Activated T-helper 2 cell treated with anti-CD3 and anti-CD28 coated beads, Interferon-gamma antibody, Interleukin-2, Interleukin-4, amounts not matched to agents 10 μg/mL and 5 μg/mL and 100 μg/mL, durations not matched to agents 14 hours and 24 hours and 36 hours (primary cell): ENCODE measurements at regions of chr1 and their contacts with region 1.

Region 1: GRCh38 chr1:244835276-244836134 is at the start of gene COX20:
- DNase-seq: peak; percentile 87
- H3K4me3 Mint-ChIP-seq: peak within 1 kb of the TSS; percentile 92
- H3K27ac Mint-ChIP-seq: peak within 1 kb of the TSS; percentile 99
- H3K4me1 Mint-ChIP-seq: peaks cover 45% of the 10 kb centered on the region
- H3K27me3 Mint-ChIP-seq: no peaks in the 10 kb centered on the region
- total RNA-seq, gene COX20: 27.1 and 33.2 TPM in 2 replicates

Region 2: DNA sequence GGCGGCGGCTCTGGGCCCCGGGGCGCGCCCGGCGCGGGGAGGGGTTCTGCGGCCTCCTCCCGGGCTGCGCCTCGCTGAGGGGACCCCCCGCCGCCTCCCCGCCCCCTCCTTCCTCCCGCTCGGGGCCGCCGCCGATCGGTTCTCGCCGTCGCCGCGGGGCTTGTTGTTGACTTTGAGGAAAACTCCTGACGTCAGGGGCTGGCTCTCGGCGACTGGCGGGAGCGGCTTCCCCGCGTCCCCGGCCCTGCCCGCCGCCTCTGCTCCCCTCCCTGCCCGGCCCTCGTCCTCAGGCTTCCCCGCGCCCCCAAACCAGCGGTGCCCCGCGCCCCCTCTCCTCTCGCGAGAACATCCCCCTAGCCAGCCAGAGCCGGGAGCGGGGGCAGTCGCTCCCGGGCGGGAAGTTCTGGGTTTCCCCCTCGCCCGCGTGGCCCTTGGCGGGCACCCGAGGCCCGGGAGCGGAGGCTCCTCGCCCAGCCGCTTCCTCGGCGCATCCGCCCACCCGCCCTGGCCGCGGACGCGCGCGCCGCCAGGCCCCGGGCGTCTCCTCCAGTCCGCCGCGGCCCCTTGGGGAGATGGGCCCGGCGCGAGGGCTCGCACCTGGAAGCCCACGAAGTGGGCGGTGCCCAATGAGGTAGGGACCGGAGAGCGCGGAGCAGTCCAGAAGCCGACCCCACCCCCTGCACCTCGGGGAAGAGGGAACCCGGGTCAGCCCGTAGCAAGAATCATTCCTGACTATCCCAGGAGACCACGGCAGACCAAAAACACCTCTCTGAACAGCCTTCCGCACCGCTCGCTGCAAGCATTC is 984.9 kb before region 1 on chr1:
- intact Hi-C with region 1: loop called (anchors 10 kb)
- DNase-seq: peak; percentile 73
- H3K4me3 Mint-ChIP-seq: peak overlapping the region; percentile 81
- H3K27ac Mint-ChIP-seq: peak overlapping the region; percentile 84
- H3K4me1 Mint-ChIP-seq: peaks cover 18% of the 10 kb centered on the region
- H3K27me3 Mint-ChIP-seq: peaks cover 39% of the 10 kb centered on the region

Region 3: GRCh38 chr1:244451951-244452795 is 383.3 kb before region 1 on chr1:
- intact Hi-C with region 1: loop called (anchors 2 kb)
- DNase-seq: peak; percentile 98
- H3K4me3 Mint-ChIP-seq: peak overlapping the region; percentile 95
- H3K27ac Mint-ChIP-seq: peak overlapping the region; percentile 96
- H3K4me1 Mint-ChIP-seq: peaks cover 34% of the 10 kb centered on the region
- H3K27me3 Mint-ChIP-seq: no peaks in the 10 kb centered on the region

Region 4: DNA sequence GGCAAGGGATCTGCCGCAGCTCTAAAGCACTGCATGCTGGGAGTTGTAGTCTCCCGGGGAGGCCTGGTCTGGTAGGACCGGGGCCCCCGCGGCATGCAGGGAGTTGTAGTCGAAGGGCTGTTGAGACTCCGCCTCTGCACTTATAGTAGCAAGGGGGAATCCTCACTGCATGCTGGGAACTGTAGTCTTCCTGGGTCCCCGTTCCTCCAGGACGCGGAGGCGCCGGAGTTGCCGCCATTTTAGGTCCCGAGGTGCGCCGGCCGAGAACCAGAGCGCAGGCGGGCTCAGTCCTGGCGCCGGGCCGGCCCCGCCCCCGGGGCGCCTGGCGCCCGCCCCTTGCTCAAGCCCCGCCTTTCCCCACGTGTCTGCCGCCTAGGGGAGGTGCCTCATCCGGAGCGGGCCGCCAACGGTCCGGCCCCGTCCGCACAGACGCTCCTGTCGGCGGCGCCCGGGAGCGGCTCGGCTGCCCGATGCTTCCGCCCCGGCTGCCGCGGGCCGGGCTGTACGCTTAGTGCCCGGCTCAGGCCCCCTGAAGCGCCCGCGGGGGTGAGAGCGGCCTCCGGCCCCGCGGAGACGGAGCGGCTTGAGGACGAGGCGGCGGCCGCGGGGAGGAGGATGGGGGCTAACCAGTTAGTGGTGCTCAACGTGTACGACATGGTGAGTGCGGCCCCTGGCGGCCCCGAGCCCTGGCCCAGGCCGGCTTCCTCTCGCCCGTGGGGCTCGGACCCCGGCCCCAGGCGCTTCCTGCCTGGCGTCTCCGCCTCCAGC is 182.6 kb before region 1 on chr1 and contains the start of gene DESI2:
- intact Hi-C with region 1: loop called (anchors 1 kb)
- DNase-seq: peak; percentile 98
- H3K4me3 Mint-ChIP-seq: peak within 1 kb of the TSS; percentile 82
- H3K27ac Mint-ChIP-seq: peak within 1 kb of the TSS; percentile 71
- H3K4me1 Mint-ChIP-seq: peaks cover 20% of the 10 kb centered on the region
- H3K27me3 Mint-ChIP-seq: peaks cover 1% of the 10 kb centered on the region
- total RNA-seq, gene DESI2: 27.4 TPM in 2 replicates

Region 5: DNA sequence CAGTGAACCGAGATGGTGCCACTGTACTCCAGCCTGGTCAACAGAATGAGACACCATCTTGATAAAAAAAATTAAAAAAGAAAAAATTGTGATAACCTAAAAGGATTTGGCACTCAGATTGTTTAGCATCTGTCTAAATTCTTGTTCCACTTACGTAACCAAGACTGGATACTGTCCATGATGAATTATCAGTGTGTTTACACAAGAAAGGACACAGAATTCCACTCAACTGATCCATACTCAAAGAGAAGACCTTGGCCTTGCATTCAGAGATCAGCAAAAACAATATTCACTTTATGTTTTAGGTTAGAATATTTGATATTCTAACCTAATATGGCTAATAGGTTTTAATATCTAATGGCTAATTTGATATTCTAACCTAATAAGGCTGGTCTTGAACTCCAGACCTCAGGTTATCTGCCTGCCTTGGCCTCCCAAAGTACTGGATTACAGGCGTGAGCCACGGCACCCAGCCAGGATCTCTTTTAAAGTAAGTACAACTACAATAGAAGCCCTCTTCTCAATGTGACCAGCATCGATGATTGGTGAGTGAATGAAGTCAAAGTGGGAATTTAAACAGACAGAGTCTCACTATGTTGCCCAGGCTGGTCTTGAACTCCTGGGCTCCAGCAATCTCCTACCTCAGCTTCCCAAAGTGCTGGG is 43.2 kb before region 1 on chr1:
- intact Hi-C with region 1: no loop called
- DNase-seq: no peak
- H3K4me3 Mint-ChIP-seq: no peak overlapping the region
- H3K27ac Mint-ChIP-seq: no peak overlapping the region
- H3K4me1 Mint-ChIP-seq: no peaks in the 10 kb centered on the region
- H3K27me3 Mint-ChIP-seq: no peaks in the 10 kb centered on the region

Region 6: DNA sequence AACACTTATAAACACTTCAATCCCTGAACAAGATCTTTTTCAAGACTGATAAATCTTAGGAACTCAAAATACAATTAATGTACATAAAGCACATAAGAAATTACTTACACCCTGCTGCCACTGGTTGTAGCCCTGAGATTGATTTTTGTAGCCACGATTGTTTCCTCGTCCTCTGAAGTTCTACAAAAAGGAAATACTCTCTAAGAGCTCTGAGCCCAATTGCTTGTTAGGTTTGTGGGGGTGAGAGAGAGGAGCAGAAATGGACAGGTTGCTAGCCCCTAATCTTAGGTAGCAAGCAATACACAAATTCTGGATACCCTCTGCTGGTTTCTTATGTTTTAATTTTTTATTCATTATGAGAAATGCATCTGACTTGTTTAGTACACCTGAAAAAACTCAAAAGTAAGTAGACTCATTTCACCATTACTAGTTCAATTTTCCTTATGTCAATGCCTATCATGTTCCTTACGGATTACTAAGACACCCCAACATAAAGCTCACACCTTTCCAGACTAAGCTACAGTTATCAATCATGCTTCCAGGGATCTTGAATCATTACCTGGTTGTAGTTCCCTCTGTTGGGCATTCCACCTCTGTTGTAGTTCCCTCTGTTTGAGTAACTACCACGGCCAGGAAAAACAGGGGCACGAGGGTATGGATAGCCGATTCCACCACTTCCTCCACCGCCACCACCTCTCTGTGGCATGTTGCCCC is 19.5 kb after region 1 on chr1:
- intact Hi-C with region 1: loop called (anchors 2 kb)
- DNase-seq: no peak
- H3K4me3 Mint-ChIP-seq: peak overlapping the region; percentile 63
- H3K27ac Mint-ChIP-seq: peak overlapping the region; percentile 66
- H3K4me1 Mint-ChIP-seq: peaks cover 69% of the 10 kb centered on the region
- H3K27me3 Mint-ChIP-seq: no peaks in the 10 kb centered on the region

Region 7: GRCh38 chr1:244970661-244971551 is 135.4 kb after region 1 on chr1:
- intact Hi-C with region 1: loop called (anchors 1 kb)
- DNase-seq: peak; percentile 88
- H3K4me3 Mint-ChIP-seq: peak overlapping the region; percentile 91
- H3K27ac Mint-ChIP-seq: peak overlapping the region; percentile 98
- H3K4me1 Mint-ChIP-seq: peaks cover 13% of the 10 kb centered on the region
- H3K27me3 Mint-ChIP-seq: peaks cover 4% of the 10 kb centered on the region

Region 8: GRCh38 chr1:246566128-246566812 is 1730.8 kb after region 1 on chr1 and contains the starts of genes CNST and TFB2M:
- intact Hi-C with region 1: loop called (anchors 10 kb)
- DNase-seq: peak; percentile 93
- H3K4me3 Mint-ChIP-seq: peak within 1 kb of the TSS; percentile 99
- H3K27ac Mint-ChIP-seq: peak within 1 kb of the TSS; percentile 98
- H3K4me1 Mint-ChIP-seq: peaks cover 35% of the 10 kb centered on the region
- H3K27me3 Mint-ChIP-seq: no peaks in the 10 kb centered on the region
- total RNA-seq, gene CNST: 18.8 and 21.6 TPM in 2 replicates
- total RNA-seq, gene TFB2M: 21.0 and 21.7 TPM in 2 replicates